ENCODE measurements at regions of chr14 and their contacts with region 1.

Region 1: GRCh38 chr14:89954070-89955028 is at the start of gene EFCAB11:
- DNase-seq: peak; percentile 89 to 99 (median 93)
- ATAC-seq: peak; percentile 80
- H3K4me3 ChIP-seq: peak within 1 kb of the TSS; percentile 68 to 69
- H3K4me3 Mint-ChIP-seq: peak within 1 kb of the TSS; percentile 92
- H3K27ac ChIP-seq: peak within 1 kb of the TSS; percentile 99
- H3K27ac Mint-ChIP-seq: peak within 1 kb of the TSS; percentile 88
- H3K4me1 ChIP-seq: peaks cover 34% of the 10 kb centered on the region
- H3K4me1 Mint-ChIP-seq: peaks cover 40% of the 10 kb centered on the region
- H3K27me3 ChIP-seq: no peaks in the 10 kb centered on the region
- H3K27me3 Mint-ChIP-seq: no peaks in the 10 kb centered on the region
- CTCF ChIP-seq: no peak
- total RNA-seq, gene EFCAB11: 0.76 to 1.1 TPM

Region 2: DNA sequence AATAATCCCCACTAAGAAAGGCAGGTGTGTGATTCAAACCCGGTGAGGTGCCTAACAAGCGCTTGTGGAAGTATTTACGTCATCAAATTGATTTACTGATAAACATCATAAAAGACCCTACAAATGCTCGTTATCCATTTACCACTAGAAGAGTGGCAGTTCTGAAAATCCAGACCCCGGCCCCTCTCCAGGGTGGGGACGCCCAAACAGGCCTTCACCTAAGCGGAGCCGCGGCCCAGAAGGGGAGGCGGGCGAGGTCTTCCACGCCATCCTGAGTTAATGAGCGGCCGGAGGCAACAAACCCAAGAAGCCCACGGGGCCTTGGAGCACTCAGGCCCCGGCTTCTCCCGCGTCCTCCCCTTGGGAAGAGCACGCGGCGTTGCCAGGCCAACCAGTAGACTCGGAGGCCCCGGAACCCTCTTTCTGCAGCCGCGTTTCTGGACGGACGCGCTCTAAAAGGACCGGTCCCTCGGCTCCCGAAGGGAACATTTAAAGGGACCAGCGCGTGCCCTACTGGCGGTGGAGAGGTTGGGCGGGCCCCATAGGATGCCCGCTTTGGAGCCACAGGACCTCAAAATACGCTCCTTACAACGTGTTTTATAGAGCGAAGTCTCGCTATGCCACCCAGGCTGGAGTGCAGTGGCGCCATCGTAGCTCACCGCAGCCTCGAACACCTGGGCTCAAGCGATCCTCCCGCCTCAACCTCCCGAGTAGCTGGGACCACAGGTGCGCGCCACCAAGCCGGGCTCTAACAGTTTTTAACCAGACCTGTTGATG is 1403.1 kb before region 1 on chr14:
- CTCF ChIA-PET with region 1: no interaction called
- POLR2A ChIA-PET with region 1: interaction called, 3 read pairs
- intact Hi-C with region 1: loop called in 1 of 2 experiments (anchors 10 kb)
- DNase-seq: peak in 7 of 9 experiments; percentile 23 to 71 (median 40)
- ATAC-seq: no peak
- H3K4me3 ChIP-seq: peak overlapping the region; percentile 36 to 47
- H3K4me3 Mint-ChIP-seq: peak overlapping the region; percentile 64
- H3K27ac ChIP-seq: no peak overlapping the region
- H3K27ac Mint-ChIP-seq: no peak overlapping the region
- H3K4me1 ChIP-seq: peaks cover 20% of the 10 kb centered on the region
- H3K4me1 Mint-ChIP-seq: peaks cover 11% of the 10 kb centered on the region
- H3K27me3 ChIP-seq: peaks cover 36 to 42% of the 10 kb centered on the region in 2 experiments
- H3K27me3 Mint-ChIP-seq: peaks cover 45% of the 10 kb centered on the region
- CTCF ChIP-seq: no peak

Region 3: GRCh38 chr14:89416002-89416995 is 538.0 kb before region 1 on chr14:
- CTCF ChIA-PET with region 1: no interaction called
- POLR2A ChIA-PET with region 1: no interaction called
- intact Hi-C with region 1: loop called (anchors 1 kb)
- DNase-seq: peak; percentile 97 to 100 (median 99)
- ATAC-seq: peak; percentile 71
- H3K4me3 ChIP-seq: peak overlapping the region; percentile 85 to 92
- H3K4me3 Mint-ChIP-seq: peak overlapping the region; percentile 94
- H3K27ac ChIP-seq: peak overlapping the region; percentile 75 to 77
- H3K27ac Mint-ChIP-seq: peak overlapping the region; percentile 93
- H3K4me1 ChIP-seq: peaks cover 30% of the 10 kb centered on the region
- H3K4me1 Mint-ChIP-seq: peaks cover 57% of the 10 kb centered on the region
- H3K27me3 ChIP-seq: no peaks in the 10 kb centered on the region
- H3K27me3 Mint-ChIP-seq: no peaks in the 10 kb centered on the region
- CTCF ChIP-seq: no peak

Region 4: GRCh38 chr14:89730687-89731086 is 223.7 kb before region 1 on chr14:
- CTCF ChIA-PET with region 1: no interaction called
- POLR2A ChIA-PET with region 1: no interaction called
- intact Hi-C with region 1: no loop called
- DNase-seq: no peak
- ATAC-seq: no peak
- H3K4me3 ChIP-seq: no peak overlapping the region
- H3K4me3 Mint-ChIP-seq: no peak overlapping the region
- H3K27ac ChIP-seq: no peak overlapping the region
- H3K27ac Mint-ChIP-seq: no peak overlapping the region
- H3K4me1 ChIP-seq: peaks cover 22% of the 10 kb centered on the region
- H3K4me1 Mint-ChIP-seq: peaks cover 32% of the 10 kb centered on the region
- H3K27me3 ChIP-seq: no peaks in the 10 kb centered on the region
- H3K27me3 Mint-ChIP-seq: no peaks in the 10 kb centered on the region
- CTCF ChIP-seq: no peak

Region 5: GRCh38 chr14:89936658-89937185 is 17.6 kb before region 1 on chr14:
- CTCF ChIA-PET with region 1: interaction called, 23 read pairs
- POLR2A ChIA-PET with region 1: interaction called, 4 read pairs
- intact Hi-C with region 1: no loop called
- DNase-seq: no peak
- ATAC-seq: no peak
- H3K4me3 ChIP-seq: no peak overlapping the region
- H3K4me3 Mint-ChIP-seq: no peak overlapping the region
- H3K27ac ChIP-seq: no peak overlapping the region
- H3K27ac Mint-ChIP-seq: no peak overlapping the region
- H3K4me1 ChIP-seq: no peaks in the 10 kb centered on the region
- H3K4me1 Mint-ChIP-seq: no peaks in the 10 kb centered on the region
- H3K27me3 ChIP-seq: no peaks in the 10 kb centered on the region
- H3K27me3 Mint-ChIP-seq: no peaks in the 10 kb centered on the region
- CTCF ChIP-seq: no peak

Region 6: GRCh38 chr14:90331497-90332435 is 377.4 kb after region 1 on chr14 and contains the start of gene NRDE2:
- CTCF ChIA-PET with region 1: no interaction called
- POLR2A ChIA-PET with region 1: no interaction called
- intact Hi-C with region 1: loop called in 1 of 2 experiments (anchors 2 kb)
- DNase-seq: peak; percentile 81 to 97 (median 93)
- ATAC-seq: peak; percentile 95
- H3K4me3 ChIP-seq: peak within 1 kb of the TSS; percentile 86 to 90
- H3K4me3 Mint-ChIP-seq: peak within 1 kb of the TSS; percentile 90
- H3K27ac ChIP-seq: peak within 1 kb of the TSS; percentile 63 to 88
- H3K27ac Mint-ChIP-seq: peak within 1 kb of the TSS; percentile 94
- H3K4me1 ChIP-seq: peaks cover 21% of the 10 kb centered on the region
- H3K4me1 Mint-ChIP-seq: peaks cover 32% of the 10 kb centered on the region
- H3K27me3 ChIP-seq: no peaks in the 10 kb centered on the region
- H3K27me3 Mint-ChIP-seq: peaks cover 11% of the 10 kb centered on the region
- CTCF ChIP-seq: no peak
- total RNA-seq, gene NRDE2: 22.8 to 23.0 TPM

Region 7: GRCh38 chr14:90495357-90496276 is 541.3 kb after region 1 on chr14:
- CTCF ChIA-PET with region 1: no interaction called
- POLR2A ChIA-PET with region 1: no interaction called
- intact Hi-C with region 1: no loop called
- DNase-seq: peak in 8 of 9 experiments; percentile 14 to 68 (median 54)
- ATAC-seq: peak; percentile 65
- H3K4me3 ChIP-seq: no peak overlapping the region
- H3K4me3 Mint-ChIP-seq: no peak overlapping the region
- H3K27ac ChIP-seq: no peak overlapping the region
- H3K27ac Mint-ChIP-seq: no peak overlapping the region
- H3K4me1 ChIP-seq: peaks cover 3% of the 10 kb centered on the region
- H3K4me1 Mint-ChIP-seq: peaks cover 2% of the 10 kb centered on the region
- H3K27me3 ChIP-seq: no peaks in the 10 kb centered on the region
- H3K27me3 Mint-ChIP-seq: peaks cover 22% of the 10 kb centered on the region
- CTCF ChIP-seq: no peak

Region 8: DNA sequence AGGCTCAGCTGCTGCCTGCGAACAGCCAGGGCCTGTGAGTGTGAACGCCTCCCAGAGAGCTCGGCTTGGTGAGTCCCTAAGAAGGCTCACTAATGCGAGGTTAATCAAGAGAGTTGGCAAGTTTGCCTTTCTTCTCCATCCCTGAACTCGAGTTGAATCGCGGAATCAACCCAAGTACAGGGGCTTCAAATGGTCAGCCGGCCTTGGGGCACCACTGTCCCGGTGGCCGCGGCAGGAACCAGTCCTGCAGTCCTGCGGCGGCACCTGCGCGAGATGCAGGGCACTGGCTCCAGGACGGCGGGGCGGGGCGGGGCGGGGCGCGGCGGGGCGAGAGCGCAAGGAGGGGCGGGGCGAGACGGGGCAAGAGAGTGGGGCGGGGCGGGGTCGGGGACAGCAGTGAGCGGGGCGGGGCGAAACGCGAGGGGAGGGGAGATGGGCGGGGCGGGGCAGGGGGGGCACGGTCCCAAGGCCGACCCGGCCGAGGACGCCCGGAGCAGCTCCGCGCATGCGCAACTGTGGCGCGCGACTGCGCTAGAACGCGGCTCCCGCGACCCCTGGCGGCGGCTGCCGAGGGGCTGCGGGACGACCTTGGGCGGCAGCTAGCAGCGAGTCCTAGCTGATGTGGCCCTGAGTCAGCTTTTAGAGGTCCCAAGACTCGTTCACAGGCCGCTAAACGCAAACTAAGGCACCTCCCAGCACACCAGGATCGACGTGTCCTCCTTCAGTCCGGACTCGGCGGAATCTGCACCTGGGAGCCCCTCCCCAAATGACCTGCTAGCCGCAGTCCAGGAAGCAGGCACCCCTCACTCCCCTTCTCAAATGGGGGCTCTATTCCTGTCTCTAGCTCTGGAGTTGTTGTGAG is 803.9 kb after region 1 on chr14:
- CTCF ChIA-PET with region 1: no interaction called
- POLR2A ChIA-PET with region 1: interaction called, 5 read pairs
- intact Hi-C with region 1: loop called in 1 of 2 experiments (anchors 5 kb)
- DNase-seq: peak; percentile 89 to 98 (median 95)
- ATAC-seq: peak; percentile 89
- H3K4me3 ChIP-seq: peak overlapping the region; percentile 58 to 74
- H3K4me3 Mint-ChIP-seq: peak overlapping the region; percentile 80
- H3K27ac ChIP-seq: peak overlapping the region; percentile 54 to 72
- H3K27ac Mint-ChIP-seq: peak overlapping the region; percentile 85
- H3K4me1 ChIP-seq: peaks cover 16% of the 10 kb centered on the region
- H3K4me1 Mint-ChIP-seq: peaks cover 18% of the 10 kb centered on the region
- H3K27me3 ChIP-seq: no peaks in the 10 kb centered on the region
- H3K27me3 Mint-ChIP-seq: peaks cover 3% of the 10 kb centered on the region
- CTCF ChIP-seq: peak; percentile 68

Region 9: GRCh38 chr14:91510174-91511042 is 1556.1 kb after region 1 on chr14 and contains the start of gene PPP4R3A:
- CTCF ChIA-PET with region 1: no interaction called
- POLR2A ChIA-PET with region 1: no interaction called
- intact Hi-C with region 1: loop called in 1 of 2 experiments (anchors 5 kb)
- DNase-seq: peak; percentile 84 to 99 (median 93)
- ATAC-seq: peak; percentile 86
- H3K4me3 ChIP-seq: peak within 1 kb of the TSS; percentile 48 to 96
- H3K4me3 Mint-ChIP-seq: peak within 1 kb of the TSS; percentile 100
- H3K27ac ChIP-seq: peak within 1 kb of the TSS; percentile 94 to 98
- H3K27ac Mint-ChIP-seq: peak within 1 kb of the TSS; percentile 100
- H3K4me1 ChIP-seq: peaks cover 26% of the 10 kb centered on the region
- H3K4me1 Mint-ChIP-seq: peaks cover 32% of the 10 kb centered on the region
- H3K27me3 ChIP-seq: no peaks in the 10 kb centered on the region
- H3K27me3 Mint-ChIP-seq: no peaks in the 10 kb centered on the region
- CTCF ChIP-seq: no peak
- total RNA-seq, gene PPP4R3A: 279 to 285 TPM

Measured in CD8-positive, alpha-beta T cell (primary cell).